Caco-2 (cell line): ENCODE measurements at regions of chr10 and their contacts with region 1.

Region 1: DNA sequence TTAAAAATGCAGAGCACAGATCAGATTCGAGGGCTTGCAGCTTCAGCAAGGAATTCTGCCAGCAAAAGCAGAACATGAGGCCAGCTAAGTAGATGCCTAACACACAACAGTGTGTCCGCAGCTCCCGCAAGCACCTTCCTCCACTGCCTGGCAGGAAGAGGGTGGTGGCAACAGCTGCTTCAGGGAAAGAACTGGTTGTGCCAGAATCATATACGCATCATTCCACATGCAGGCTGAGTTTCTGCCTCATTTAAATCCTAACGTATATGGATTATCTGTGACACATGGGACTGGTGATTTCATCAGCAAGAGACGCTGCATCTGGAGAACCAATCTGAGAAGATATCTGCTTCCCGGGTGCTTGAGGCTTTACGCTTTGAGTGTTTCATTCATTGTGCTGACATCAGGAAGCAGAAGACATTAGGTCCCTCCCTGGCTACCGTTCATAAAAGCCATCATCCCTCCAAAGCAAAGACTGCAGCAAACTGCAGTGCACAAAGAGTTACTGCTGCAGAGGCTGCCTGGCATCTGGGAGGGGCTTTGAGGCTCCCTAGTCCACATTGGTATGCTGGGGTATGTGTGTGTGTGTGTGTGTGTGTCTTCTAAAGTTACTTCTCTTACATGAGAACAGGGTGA is 78.8 kb downstream of the FAM13C start:
- DNase-seq: no peak
- H3K4me3 ChIP-seq: no peak overlapping the region
- H3K4me3 Mint-ChIP-seq: no peak overlapping the region
- H3K27ac Mint-ChIP-seq: no peak overlapping the region
- H3K4me1 ChIP-seq: no peaks in the 10 kb centered on the region
- H3K4me1 Mint-ChIP-seq: no peaks in the 10 kb centered on the region
- H3K27me3 ChIP-seq: no peaks in the 10 kb centered on the region; the same call in 1 of the 2 replicates
- H3K27me3 Mint-ChIP-seq: peaks cover 19% of the 10 kb centered on the region
- CTCF ChIP-seq: no peak

Region 2: DNA sequence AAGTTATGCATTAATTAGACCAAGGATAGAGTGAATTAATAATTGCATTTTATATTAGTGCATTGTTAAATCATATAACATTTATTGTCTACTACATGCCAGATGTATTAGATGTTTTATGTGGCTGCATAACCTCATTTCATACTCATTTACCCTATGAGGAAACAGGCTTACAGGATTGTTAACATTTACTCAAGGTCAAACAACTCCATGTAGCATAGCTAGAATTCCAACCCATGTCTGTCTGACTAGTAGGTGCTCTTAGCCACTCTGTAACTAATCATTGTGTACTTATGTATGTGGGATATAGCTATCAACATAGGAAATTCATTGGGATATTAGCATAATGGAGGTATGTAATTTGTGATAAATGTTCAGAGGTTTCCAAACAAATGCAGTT is 60.8 kb before region 1 on chr10:
- CTCF ChIA-PET with region 1: no interaction called
- POLR2A ChIA-PET with region 1: no interaction called
- intact Hi-C with region 1: no loop called
- DNase-seq: peak in 1 of 2 experiments; percentile 43
- H3K4me3 ChIP-seq: no peak overlapping the region
- H3K4me3 Mint-ChIP-seq: no peak overlapping the region
- H3K27ac Mint-ChIP-seq: peak overlapping the region; percentile 36
- H3K4me1 ChIP-seq: peaks cover 20% of the 10 kb centered on the region
- H3K4me1 Mint-ChIP-seq: peaks cover 28% of the 10 kb centered on the region
- H3K27me3 ChIP-seq: no peaks in the 10 kb centered on the region
- H3K27me3 Mint-ChIP-seq: no peaks in the 10 kb centered on the region
- CTCF ChIP-seq: no peak

Region 3: DNA sequence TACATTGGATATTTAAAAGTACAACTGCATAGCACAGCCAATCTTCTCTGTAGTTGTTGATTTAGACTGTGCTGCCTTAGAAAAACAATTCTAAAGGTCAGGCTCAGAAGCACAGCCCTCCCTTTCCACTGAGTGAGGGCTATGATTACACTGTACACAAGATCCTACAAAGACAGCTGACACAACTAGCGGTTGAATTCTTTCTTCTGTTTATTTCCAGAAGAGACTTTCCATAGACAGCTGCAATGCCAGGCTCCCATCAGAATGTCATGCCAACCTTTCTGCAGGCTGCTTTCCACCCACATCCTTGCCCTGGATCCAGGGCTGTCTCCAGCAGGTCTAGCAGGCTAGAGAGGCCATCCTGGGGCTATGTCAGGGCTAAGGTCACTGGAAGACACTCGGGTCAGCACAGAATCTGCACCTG is 39.5 kb after region 1 on chr10:
- CTCF ChIA-PET with region 1: no interaction called
- POLR2A ChIA-PET with region 1: no interaction called
- intact Hi-C with region 1: loop called (anchors 2 kb)
- DNase-seq: peak in 1 of 2 experiments; percentile 42
- H3K4me3 ChIP-seq: no peak overlapping the region
- H3K4me3 Mint-ChIP-seq: no peak overlapping the region
- H3K27ac Mint-ChIP-seq: no peak overlapping the region
- H3K4me1 ChIP-seq: peaks cover 12% of the 10 kb centered on the region
- H3K4me1 Mint-ChIP-seq: peaks cover 7% of the 10 kb centered on the region
- H3K27me3 ChIP-seq: no peaks in the 10 kb centered on the region; the same call in 1 of the 2 replicates
- H3K27me3 Mint-ChIP-seq: peaks cover 2% of the 10 kb centered on the region
- CTCF ChIP-seq: no peak

Region 4: DNA sequence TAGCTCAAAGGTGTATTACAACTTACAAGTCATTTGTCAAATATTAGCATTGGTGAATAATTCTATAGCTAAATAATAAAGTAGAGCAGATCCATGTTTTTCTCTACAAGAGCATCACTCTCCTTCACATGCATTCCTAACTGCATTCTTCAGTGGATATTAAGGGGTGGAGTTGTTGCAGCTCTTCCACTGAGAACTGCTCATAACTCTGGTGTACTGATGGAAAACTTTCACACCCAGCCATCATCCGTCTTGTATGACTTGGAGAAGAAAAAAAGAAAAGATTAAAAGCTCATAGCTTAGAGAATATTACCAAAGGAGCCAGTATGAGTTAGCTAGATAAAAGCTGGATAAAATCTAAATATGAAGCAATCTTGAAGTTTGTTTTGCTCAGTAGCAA is 89.0 kb after region 1 on chr10:
- CTCF ChIA-PET with region 1: no interaction called
- POLR2A ChIA-PET with region 1: no interaction called
- intact Hi-C with region 1: no loop called
- DNase-seq: no peak
- H3K4me3 ChIP-seq: no peak overlapping the region
- H3K4me3 Mint-ChIP-seq: no peak overlapping the region
- H3K27ac Mint-ChIP-seq: no peak overlapping the region
- H3K4me1 ChIP-seq: no peaks in the 10 kb centered on the region
- H3K4me1 Mint-ChIP-seq: no peaks in the 10 kb centered on the region
- H3K27me3 ChIP-seq: no peaks in the 10 kb centered on the region
- H3K27me3 Mint-ChIP-seq: peaks cover 14% of the 10 kb centered on the region
- CTCF ChIP-seq: no peak